ENCODE measurements at regions of chr11 and their contacts with region 1.

Region 1: DNA sequence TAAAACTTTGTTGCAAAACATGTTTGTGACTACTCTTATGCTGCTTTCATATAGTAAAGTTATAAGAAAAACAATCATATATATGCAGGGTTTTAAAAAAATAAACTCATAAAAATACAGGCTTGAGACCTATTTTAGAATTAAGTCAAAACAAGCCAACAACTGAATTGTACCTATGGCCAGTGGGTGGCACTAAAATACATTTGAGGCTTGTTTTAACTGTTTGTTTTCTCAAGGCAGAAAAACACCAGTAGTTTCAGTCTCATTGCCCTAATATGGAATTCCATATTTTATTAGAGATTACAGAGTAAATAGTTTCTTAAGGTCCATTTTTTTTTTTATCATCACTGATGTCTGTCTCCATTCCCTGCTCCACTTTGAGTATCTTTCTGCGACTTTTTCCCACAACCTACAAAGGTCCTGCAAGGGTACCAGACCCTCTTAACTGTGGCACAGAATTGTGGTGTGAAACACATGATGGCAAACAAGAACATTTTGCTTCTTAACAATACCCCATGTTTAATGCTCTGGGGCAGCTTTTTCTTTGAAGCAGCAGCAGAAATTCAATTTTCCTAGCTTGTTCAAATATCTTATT is 8.5 kb upstream of the CCDC89 start:
- DNase-seq: peak; percentile 58
- H3K4me3 ChIP-seq: no peak overlapping the region
- H3K27ac ChIP-seq: no peak overlapping the region
- H3K4me1 ChIP-seq: no peaks in the 10 kb centered on the region
- H3K27me3 ChIP-seq: peaks cover 22% of the 10 kb centered on the region
- CTCF ChIP-seq: peak; percentile 66

Region 2: GRCh38 chr11:85682330-85683305 is 11.9 kb before region 1 on chr11:
- CTCF ChIA-PET with region 1: no interaction called
- POLR2A ChIA-PET with region 1: no interaction called
- intact Hi-C with region 1: no loop called
- DNase-seq: peak; percentile 37
- H3K4me3 ChIP-seq: peak overlapping the region; percentile 45
- H3K27ac ChIP-seq: no peak overlapping the region
- H3K4me1 ChIP-seq: no peaks in the 10 kb centered on the region
- H3K27me3 ChIP-seq: peaks cover 17% of the 10 kb centered on the region
- CTCF ChIP-seq: no peak

Region 3: GRCh38 chr11:85826116-85826855 is 131.8 kb after region 1 on chr11:
- CTCF ChIA-PET with region 1: no interaction called
- POLR2A ChIA-PET with region 1: no interaction called
- intact Hi-C with region 1: loop called (anchors 5 kb)
- DNase-seq: peak; percentile 24
- H3K4me3 ChIP-seq: no peak overlapping the region
- H3K27ac ChIP-seq: no peak overlapping the region
- H3K4me1 ChIP-seq: no peaks in the 10 kb centered on the region
- H3K27me3 ChIP-seq: no peaks in the 10 kb centered on the region
- CTCF ChIP-seq: peak; percentile 45

Measured in A673 (cell line).